Tibial artery (tissue), 4 donors: ENCODE measurements at regions of chr6 and their contacts with region 1.

Region 1: GRCh38 chr6:110873981-110874879 is at the start of gene AMD1:
- DNase-seq: peak; percentile 98 to 99
- H3K4me3 ChIP-seq: peak within 1 kb of the TSS; percentile 82 to 88
- H3K27ac ChIP-seq: peak within 1 kb of the TSS; percentile 92 to 94
- H3K4me1 ChIP-seq: peaks cover 0 to 34% (median 15%) of the 10 kb centered on the region in 4 donors
- H3K27me3 ChIP-seq: no peaks in the 10 kb centered on the region
- CTCF ChIP-seq: peak in 1 of 2 experiments; percentile 24

Region 2: DNA sequence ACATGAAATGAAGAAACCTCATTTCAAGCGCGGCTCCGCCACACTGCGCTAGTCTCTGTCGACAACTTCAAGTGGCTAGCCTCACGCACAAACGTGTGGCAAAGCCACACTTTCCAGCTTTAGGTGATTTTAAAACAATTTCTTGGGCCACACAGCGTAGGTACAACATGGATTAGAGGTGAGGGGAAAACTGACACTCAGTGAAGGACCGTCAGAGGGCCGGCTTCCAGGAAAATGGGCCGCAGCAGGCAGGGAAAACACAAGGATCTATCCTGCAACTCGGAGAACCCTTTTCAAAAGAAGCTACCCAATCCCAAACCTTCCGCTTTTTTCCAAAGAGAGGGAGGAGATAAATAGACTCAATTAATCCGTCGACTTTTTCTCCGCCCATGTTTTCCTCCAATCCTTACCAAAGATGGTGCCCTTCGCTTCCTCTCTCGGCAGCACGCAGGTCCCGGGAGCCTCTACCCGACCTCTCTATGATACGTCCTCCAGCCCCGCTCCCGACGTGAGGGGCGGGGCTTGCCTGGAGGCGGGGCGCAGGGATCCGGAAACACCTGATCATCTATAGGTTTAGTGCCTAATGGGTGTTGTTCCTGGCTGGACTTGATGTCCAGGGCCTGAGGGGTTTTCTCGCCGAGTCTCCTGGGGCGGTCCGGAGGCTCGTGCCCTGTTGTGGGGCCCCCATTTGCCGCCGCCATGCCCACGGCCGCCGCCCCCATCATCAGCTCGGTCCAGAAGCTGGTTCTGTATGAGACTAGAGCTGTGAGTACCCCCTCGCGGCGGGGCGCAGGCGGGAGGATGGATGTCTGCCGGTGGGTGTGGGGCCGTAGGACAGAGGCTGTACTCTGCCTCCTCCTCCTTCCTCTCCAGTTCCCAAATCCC is 1183.3 kb before region 1 on chr6 and contains the starts of genes AK9 and FIG4:
- intact Hi-C with region 1: loop called (anchors 10 kb)
- DNase-seq: peak; percentile 96 to 97
- H3K4me3 ChIP-seq: peak within 1 kb of the TSS; percentile 72 to 82
- H3K27ac ChIP-seq: peak within 1 kb of the TSS; percentile 88 to 93
- H3K4me1 ChIP-seq: peaks cover 0 to 30% (median 19%) of the 10 kb centered on the region in 4 donors
- H3K27me3 ChIP-seq: no peaks in the 10 kb centered on the region
- CTCF ChIP-seq: peak in 1 of 2 experiments; percentile 26

Region 3: DNA sequence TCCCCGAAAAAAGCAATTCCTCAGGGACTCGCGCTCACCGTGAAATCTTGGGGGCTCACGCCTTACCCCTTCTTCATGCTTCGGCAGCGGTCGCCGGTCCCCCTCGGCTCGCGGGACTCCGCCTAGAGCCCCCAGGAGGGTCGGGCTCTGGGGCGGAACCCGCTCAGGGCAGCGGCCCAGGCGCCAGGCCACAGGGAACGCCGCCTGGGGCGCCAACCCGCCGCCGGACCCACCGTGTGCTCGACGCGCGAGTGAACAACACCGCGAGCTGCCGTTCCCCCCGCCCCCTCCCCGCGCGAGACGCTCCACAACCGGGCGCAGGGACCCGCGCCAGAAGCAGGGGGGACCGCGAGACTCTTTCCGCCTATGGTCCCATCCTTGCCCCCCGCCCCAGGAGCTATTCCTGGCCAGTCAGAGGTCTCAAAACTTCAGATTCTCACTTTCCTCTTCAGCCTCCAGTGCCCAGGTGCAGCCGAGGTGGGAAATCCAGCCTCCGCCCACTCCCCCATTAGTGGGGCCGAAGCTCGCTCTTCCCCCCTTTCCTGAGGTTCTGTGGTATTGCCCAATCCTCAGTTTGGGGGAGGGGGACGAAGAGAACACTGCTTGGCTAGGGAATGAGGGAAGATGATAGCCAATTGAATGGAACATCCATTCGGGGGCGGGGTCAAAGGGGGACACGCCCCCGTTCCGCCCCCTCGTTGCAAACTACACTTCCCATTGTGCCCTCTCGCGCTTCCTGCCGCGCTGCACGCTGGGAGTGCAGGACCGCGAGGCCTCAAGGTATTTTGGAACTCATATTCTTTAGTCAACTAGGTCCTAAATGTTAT is 694.6 kb before region 1 on chr6 and contains the start of gene WASF1:
- intact Hi-C with region 1: loop called (anchors 5 kb)
- DNase-seq: peak; percentile 95 to 96
- H3K4me3 ChIP-seq: peak within 1 kb of the TSS; percentile 66 to 71
- H3K27ac ChIP-seq: peak within 1 kb of the TSS; percentile 75 to 85
- H3K4me1 ChIP-seq: peaks cover 0 to 38% (median 32%) of the 10 kb centered on the region in 4 donors
- H3K27me3 ChIP-seq: no peaks in the 10 kb centered on the region
- CTCF ChIP-seq: peak in 1 of 2 experiments; percentile 24

Region 4: GRCh38 chr6:110682460-110682853 is 191.8 kb before region 1 on chr6:
- intact Hi-C with region 1: loop called (anchors 5 kb)
- DNase-seq: peak in 1 of 2 donors; percentile 58
- H3K4me3 ChIP-seq: no peak overlapping the region
- H3K27ac ChIP-seq: no peak overlapping the region
- H3K4me1 ChIP-seq: peaks cover 0 to 12% (median 0%) of the 10 kb centered on the region in 4 donors
- H3K27me3 ChIP-seq: no peaks in the 10 kb centered on the region
- CTCF ChIP-seq: peak; percentile 60 to 77

Region 5: GRCh38 chr6:110815217-110816109 is 58.8 kb before region 1 on chr6 and contains the start of gene CDK19:
- intact Hi-C with region 1: loop called (anchors 1 kb)
- DNase-seq: peak; percentile 99
- H3K4me3 ChIP-seq: peak within 1 kb of the TSS; percentile 74 to 75
- H3K27ac ChIP-seq: peak within 1 kb of the TSS; percentile 92 to 97
- H3K4me1 ChIP-seq: peaks cover 0 to 19% (median 15%) of the 10 kb centered on the region in 4 donors
- H3K27me3 ChIP-seq: no peaks in the 10 kb centered on the region
- CTCF ChIP-seq: no peak

Region 6: GRCh38 chr6:110841266-110841665 is 33.0 kb before region 1 on chr6:
- intact Hi-C with region 1: no loop called
- DNase-seq: no peak
- H3K4me3 ChIP-seq: no peak overlapping the region
- H3K27ac ChIP-seq: no peak overlapping the region
- H3K4me1 ChIP-seq: no peaks in the 10 kb centered on the region
- H3K27me3 ChIP-seq: no peaks in the 10 kb centered on the region
- CTCF ChIP-seq: no peak

Region 7: DNA sequence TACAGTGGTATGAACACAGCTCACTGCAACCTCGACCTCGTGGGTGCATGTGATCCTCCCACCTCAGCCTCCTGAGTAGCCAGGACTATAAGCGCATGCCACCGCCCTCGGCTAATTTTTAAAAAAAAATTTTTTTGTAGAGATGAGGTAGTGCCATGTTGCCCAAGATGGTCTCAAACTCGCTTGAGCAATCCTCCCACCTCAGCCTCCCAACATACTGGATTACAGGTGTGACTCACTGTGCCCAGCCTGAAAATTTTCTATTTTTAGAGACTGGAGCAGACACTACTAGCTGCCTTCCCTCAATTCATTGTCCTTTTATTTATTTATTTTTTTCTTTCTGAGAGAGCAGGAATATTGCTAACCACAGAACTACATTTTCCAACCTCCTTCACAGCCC is 63.9 kb after region 1 on chr6:
- intact Hi-C with region 1: no loop called
- DNase-seq: no peak
- H3K4me3 ChIP-seq: no peak overlapping the region
- H3K27ac ChIP-seq: no peak overlapping the region
- H3K4me1 ChIP-seq: no peaks in the 10 kb centered on the region
- H3K27me3 ChIP-seq: no peaks in the 10 kb centered on the region
- CTCF ChIP-seq: no peak

Region 8: GRCh38 chr6:110958329-110959192 is 84.3 kb after region 1 on chr6 and contains the start of gene GTF3C6:
- intact Hi-C with region 1: loop called (anchors 10 kb)
- DNase-seq: peak; percentile 96
- H3K4me3 ChIP-seq: peak within 1 kb of the TSS; percentile 83 to 96
- H3K27ac ChIP-seq: peak within 1 kb of the TSS; percentile 91 to 93
- H3K4me1 ChIP-seq: peaks cover 0 to 13% (median 12%) of the 10 kb centered on the region in 4 donors
- H3K27me3 ChIP-seq: no peaks in the 10 kb centered on the region
- CTCF ChIP-seq: no peak

Region 9: GRCh38 chr6:110981202-110981600 is 107.0 kb after region 1 on chr6:
- intact Hi-C with region 1: loop called (anchors 10 kb)
- DNase-seq: no peak
- H3K4me3 ChIP-seq: peak overlapping the region; percentile 66 to 97
- H3K27ac ChIP-seq: peak overlapping the region; percentile 81 to 94
- H3K4me1 ChIP-seq: peaks cover 0 to 15% (median 8%) of the 10 kb centered on the region in 4 donors
- H3K27me3 ChIP-seq: no peaks in the 10 kb centered on the region
- CTCF ChIP-seq: no peak